Dendritic cell treated with granulocyte-macrophage colony-stimulating factor and Interleukin-4, amounts not matched to agents 40 ng/mL and 50 ng/mL, for 4 days (primary cell): ENCODE measurements at regions of chr4 and their contacts with region 1.

Region 1: GRCh38 chr4:184343502-184344177 is 126.0 kb upstream of the ENPP6 start:
- H3K4me3 Mint-ChIP-seq: peak overlapping the region; percentile 84
- H3K27ac Mint-ChIP-seq: peak overlapping the region; percentile 94
- H3K4me1 Mint-ChIP-seq: peaks cover 71% of the 10 kb centered on the region
- H3K27me3 Mint-ChIP-seq: no peaks in the 10 kb centered on the region

Region 2: DNA sequence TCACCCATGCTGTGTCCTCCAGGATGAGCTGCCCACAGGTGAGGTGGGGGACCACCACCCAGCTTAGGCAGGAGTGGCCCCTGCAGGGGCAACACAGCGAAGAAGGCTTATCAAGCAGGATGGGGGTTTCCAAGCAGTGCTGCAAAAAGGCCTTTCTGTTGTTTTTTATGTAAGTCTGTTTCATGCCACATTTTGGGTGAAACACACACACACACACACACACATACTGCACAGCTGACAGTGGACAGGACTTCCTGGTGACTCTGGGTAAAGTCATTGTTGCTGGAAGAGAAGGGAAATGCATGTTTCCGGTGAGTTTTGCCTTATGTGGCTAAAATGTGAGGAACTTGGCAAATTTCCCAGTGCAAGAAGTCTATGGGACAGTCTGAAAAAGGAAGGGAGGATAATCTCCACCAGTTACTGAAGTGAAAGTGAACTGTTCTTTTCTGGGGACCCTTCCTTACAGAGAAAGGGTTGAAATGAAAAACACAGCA is 11.5 kb after region 1 on chr4:
- intact Hi-C with region 1: loop called (anchors 1 kb)
- H3K4me3 Mint-ChIP-seq: no peak overlapping the region
- H3K27ac Mint-ChIP-seq: peak overlapping the region; percentile 87
- H3K4me1 Mint-ChIP-seq: peaks cover 33% of the 10 kb centered on the region
- H3K27me3 Mint-ChIP-seq: no peaks in the 10 kb centered on the region

Region 3: GRCh38 chr4:184392748-184393334 is 49.2 kb after region 1 on chr4:
- intact Hi-C with region 1: loop called (anchors 1 kb)
- H3K4me3 Mint-ChIP-seq: peak overlapping the region; percentile 69
- H3K27ac Mint-ChIP-seq: peak overlapping the region; percentile 96
- H3K4me1 Mint-ChIP-seq: peaks cover 74% of the 10 kb centered on the region
- H3K27me3 Mint-ChIP-seq: no peaks in the 10 kb centered on the region